GM12878 (cell line): ENCODE measurements at regions of chr2 and their contacts with region 1.

Region 1: GRCh38 chr2:11829947-11830707 is 83.7 kb downstream of the LPIN1 start:
- DNase-seq: peak; percentile 96
- ATAC-seq: peak; percentile 84
- H3K4me3 ChIP-seq: peak overlapping the region; percentile 38; the same call in 1 of the 2 replicates
- H3K27ac ChIP-seq: peak overlapping the region; percentile 78
- H3K4me1 ChIP-seq: peaks cover 27% of the 10 kb centered on the region
- H3K27me3 ChIP-seq: 0 out of 4 replicates have a peak, but pooled peaks cover 0 to 2% of the 10 kb centered on the region in 2 experiments
- CTCF ChIP-seq: peak in 2 of 3 experiments; percentile 7 to 58; a peak in 3 of 6 replicates
- EP300 ChIP-seq: peak; percentile 88 to 97; a peak in 3 of 4 replicates
- POLR2A ChIP-seq: no peak
- RAD21 ChIP-seq: peak; percentile 54

Region 2: DNA sequence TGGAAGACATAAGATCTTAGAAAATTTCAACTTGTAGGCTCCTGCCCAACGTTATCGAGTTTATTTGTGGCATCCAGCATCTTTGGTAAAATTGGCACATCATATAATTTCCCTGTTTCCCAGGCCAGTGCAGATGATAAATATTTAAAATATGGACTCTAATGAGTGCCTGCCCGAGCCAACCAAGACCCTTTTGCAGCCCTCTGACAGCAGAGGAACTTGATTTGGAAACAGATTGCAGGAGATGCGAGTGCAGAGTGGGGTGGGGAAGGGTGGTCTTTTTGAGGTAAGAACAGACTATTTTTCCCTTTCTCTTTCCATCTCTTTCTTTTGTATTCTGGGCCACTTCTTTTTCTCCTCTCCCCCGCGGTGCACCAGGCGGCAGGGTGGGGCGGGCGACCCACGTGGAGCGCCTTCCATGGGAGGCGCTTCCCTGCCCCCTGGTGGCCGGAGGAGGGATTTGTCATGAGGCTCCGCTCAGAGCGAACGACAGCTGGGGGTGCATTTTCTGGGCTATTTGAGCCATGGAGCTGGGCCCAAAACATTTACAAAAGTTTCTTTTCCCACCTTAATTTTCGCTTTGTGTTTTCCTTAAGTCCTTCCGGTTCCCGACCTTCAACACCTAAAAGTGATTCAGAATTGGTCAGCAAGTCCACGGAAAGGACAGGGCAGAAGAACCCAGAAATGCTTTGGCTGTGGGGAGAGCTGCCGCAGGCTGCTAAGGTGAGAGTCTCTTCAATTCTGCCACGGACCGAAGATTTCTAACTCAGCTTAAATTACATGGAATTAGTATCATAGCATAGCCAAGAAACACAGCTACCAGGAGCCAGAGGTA is 51.0 kb before region 1 on chr2:
- CTCF ChIA-PET with region 1: interaction called, 10 read pairs
- POLR2A ChIA-PET with region 1: no interaction called
- RAD21 ChIA-PET with region 1: interaction called, 4 read pairs
- SMC1A ChIA-PET with region 1: interaction called, 7 read pairs
- in situ Hi-C with region 1: no loop called
- intact Hi-C with region 1: no loop called
- DNase-seq: no peak
- ATAC-seq: peak; percentile 97
- H3K4me3 ChIP-seq: no peak overlapping the region
- H3K27ac ChIP-seq: no peak overlapping the region
- H3K4me1 ChIP-seq: peaks cover 7% of the 10 kb centered on the region
- H3K27me3 ChIP-seq: no peaks in the 10 kb centered on the region
- CTCF ChIP-seq: peak; percentile 92 to 95 (median 94)
- EP300 ChIP-seq: no peak
- POLR2A ChIP-seq: no peak
- RAD21 ChIP-seq: peak; percentile 97

Region 3: DNA sequence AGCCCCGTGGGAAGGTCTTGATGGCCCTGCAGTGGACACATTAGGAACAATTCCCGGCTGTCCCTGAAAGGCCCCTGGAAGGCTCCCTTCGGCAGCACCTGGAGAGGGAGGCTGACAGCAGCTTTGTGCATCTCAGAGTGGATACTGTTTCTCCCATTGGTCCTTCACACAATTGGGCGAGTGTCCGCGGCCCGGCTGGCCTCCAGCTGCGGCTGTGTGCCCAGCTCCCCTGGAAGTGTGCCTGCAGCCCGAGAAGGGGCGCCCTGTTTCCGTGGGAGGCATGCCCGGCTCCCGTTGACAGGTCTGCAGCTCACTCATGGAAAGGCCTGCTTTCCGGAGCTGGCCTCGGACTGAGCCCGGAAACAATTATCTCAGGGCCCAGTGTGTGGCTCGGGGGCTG is 20.0 kb after region 1 on chr2:
- CTCF ChIA-PET with region 1: no interaction called
- POLR2A ChIA-PET with region 1: no interaction called
- RAD21 ChIA-PET with region 1: no interaction called
- SMC1A ChIA-PET with region 1: no interaction called
- in situ Hi-C with region 1: no loop called
- intact Hi-C with region 1: no loop called
- DNase-seq: no peak
- ATAC-seq: no peak
- H3K4me3 ChIP-seq: no peak overlapping the region
- H3K27ac ChIP-seq: no peak overlapping the region
- H3K4me1 ChIP-seq: peaks cover 7% of the 10 kb centered on the region
- H3K27me3 ChIP-seq: no peaks in the 10 kb centered on the region
- CTCF ChIP-seq: no peak
- EP300 ChIP-seq: no peak
- POLR2A ChIP-seq: no peak
- RAD21 ChIP-seq: no peak

Region 4: GRCh38 chr2:12032398-12032797 is 202.3 kb after region 1 on chr2:
- CTCF ChIA-PET with region 1: interaction called, 7 read pairs
- POLR2A ChIA-PET with region 1: no interaction called
- RAD21 ChIA-PET with region 1: interaction called, 9 read pairs
- SMC1A ChIA-PET with region 1: interaction called, 8 read pairs
- in situ Hi-C with region 1: no loop called
- intact Hi-C with region 1: loop called (anchors 5 kb)
- DNase-seq: peak; percentile 71
- ATAC-seq: peak; percentile 91
- H3K4me3 ChIP-seq: no peak overlapping the region
- H3K27ac ChIP-seq: 0 out of 2 replicates have a peak overlapping the region, but pooled peaks have one; percentile 1
- H3K4me1 ChIP-seq: peaks cover 44% of the 10 kb centered on the region
- H3K27me3 ChIP-seq: no peaks in the 10 kb centered on the region
- CTCF ChIP-seq: peak; percentile 36 to 45 (median 45); a peak in 4 of 6 replicates
- EP300 ChIP-seq: 0 out of 4 replicates have a peak, but pooled peaks of 1 of the 2 experiments have one; percentile 9
- POLR2A ChIP-seq: no peak
- RAD21 ChIP-seq: peak; percentile 65

Region 5: GRCh38 chr2:12270876-12271588 is 440.9 kb after region 1 on chr2:
- CTCF ChIA-PET with region 1: interaction called, 4 read pairs
- POLR2A ChIA-PET with region 1: no interaction called
- RAD21 ChIA-PET with region 1: interaction called, 3 read pairs
- SMC1A ChIA-PET with region 1: no interaction called
- in situ Hi-C with region 1: loop called (anchors 25 kb)
- intact Hi-C with region 1: loop called (anchors 5 kb)
- DNase-seq: no peak
- ATAC-seq: peak; percentile 90
- H3K4me3 ChIP-seq: no peak overlapping the region
- H3K27ac ChIP-seq: no peak overlapping the region
- H3K4me1 ChIP-seq: peaks cover 9% of the 10 kb centered on the region
- H3K27me3 ChIP-seq: no peaks in the 10 kb centered on the region
- CTCF ChIP-seq: no peak
- EP300 ChIP-seq: no peak; a peak in 1 of 4 replicates
- POLR2A ChIP-seq: no peak
- RAD21 ChIP-seq: no peak

Region 6: GRCh38 chr2:12430407-12431133 is 600.4 kb after region 1 on chr2:
- CTCF ChIA-PET with region 1: interaction called, 6 read pairs
- POLR2A ChIA-PET with region 1: no interaction called
- RAD21 ChIA-PET with region 1: interaction called, 4 read pairs
- SMC1A ChIA-PET with region 1: no interaction called
- in situ Hi-C with region 1: no loop called
- intact Hi-C with region 1: loop called (anchors 1 kb)
- DNase-seq: peak; percentile 91
- ATAC-seq: peak; percentile 99
- H3K4me3 ChIP-seq: no peak overlapping the region
- H3K27ac ChIP-seq: no peak overlapping the region; the same call in 1 of the 2 replicates
- H3K4me1 ChIP-seq: no peaks in the 10 kb centered on the region
- H3K27me3 ChIP-seq: no peaks in the 10 kb centered on the region
- CTCF ChIP-seq: peak in 1 of 3 experiments; percentile 12; a peak in 1 of 6 replicates
- EP300 ChIP-seq: no peak
- POLR2A ChIP-seq: no peak
- RAD21 ChIP-seq: peak; percentile 15; the same call in 1 of the 2 replicates

Region 7: GRCh38 chr2:12931186-12931844 is 1101.2 kb after region 1 on chr2:
- CTCF ChIA-PET with region 1: interaction called, 65 read pairs
- POLR2A ChIA-PET with region 1: no interaction called
- RAD21 ChIA-PET with region 1: interaction called, 48 read pairs
- SMC1A ChIA-PET with region 1: interaction called, 43 read pairs
- in situ Hi-C with region 1: loop called (anchors 10 kb)
- intact Hi-C with region 1: loop called (anchors 2 kb)
- DNase-seq: no peak
- ATAC-seq: peak; percentile 81
- H3K4me3 ChIP-seq: no peak overlapping the region
- H3K27ac ChIP-seq: no peak overlapping the region
- H3K4me1 ChIP-seq: no peaks in the 10 kb centered on the region
- H3K27me3 ChIP-seq: no peaks in the 10 kb centered on the region; a peak in 1 of 4 replicates
- CTCF ChIP-seq: peak; percentile 68 to 77 (median 75)
- EP300 ChIP-seq: no peak
- POLR2A ChIP-seq: no peak
- RAD21 ChIP-seq: peak; percentile 59

Region 8: DNA sequence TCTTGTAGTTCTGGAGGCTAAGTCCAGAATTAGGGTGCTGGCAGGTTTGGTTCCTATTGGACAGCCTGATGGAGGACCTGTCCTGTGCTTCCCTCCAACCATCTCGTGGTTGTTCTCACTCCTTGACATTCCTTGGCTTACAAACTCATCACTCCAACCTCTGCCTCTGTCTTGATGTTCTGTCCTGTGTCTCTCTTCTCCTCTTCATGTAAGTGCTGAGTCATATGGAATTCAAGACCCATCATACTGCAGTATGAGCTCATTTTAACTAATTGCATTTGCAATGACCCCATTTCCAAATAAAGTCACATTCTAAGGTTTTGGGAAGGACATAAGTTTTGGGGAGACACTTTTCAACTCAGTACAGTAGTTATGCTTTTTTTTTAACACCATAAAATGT is 1261.3 kb after region 1 on chr2:
- CTCF ChIA-PET with region 1: no interaction called
- POLR2A ChIA-PET with region 1: no interaction called
- RAD21 ChIA-PET with region 1: no interaction called
- SMC1A ChIA-PET with region 1: no interaction called
- in situ Hi-C with region 1: no loop called
- intact Hi-C with region 1: no loop called
- DNase-seq: no peak
- ATAC-seq: no peak
- H3K4me3 ChIP-seq: no peak overlapping the region
- H3K27ac ChIP-seq: no peak overlapping the region
- H3K4me1 ChIP-seq: no peaks in the 10 kb centered on the region
- H3K27me3 ChIP-seq: no peaks in the 10 kb centered on the region
- CTCF ChIP-seq: no peak
- EP300 ChIP-seq: no peak
- POLR2A ChIP-seq: no peak
- RAD21 ChIP-seq: no peak